CD8-positive, alpha-beta T cell (primary cell): ENCODE measurements at regions of chr18 and their contacts with region 1.

Region 1: DNA sequence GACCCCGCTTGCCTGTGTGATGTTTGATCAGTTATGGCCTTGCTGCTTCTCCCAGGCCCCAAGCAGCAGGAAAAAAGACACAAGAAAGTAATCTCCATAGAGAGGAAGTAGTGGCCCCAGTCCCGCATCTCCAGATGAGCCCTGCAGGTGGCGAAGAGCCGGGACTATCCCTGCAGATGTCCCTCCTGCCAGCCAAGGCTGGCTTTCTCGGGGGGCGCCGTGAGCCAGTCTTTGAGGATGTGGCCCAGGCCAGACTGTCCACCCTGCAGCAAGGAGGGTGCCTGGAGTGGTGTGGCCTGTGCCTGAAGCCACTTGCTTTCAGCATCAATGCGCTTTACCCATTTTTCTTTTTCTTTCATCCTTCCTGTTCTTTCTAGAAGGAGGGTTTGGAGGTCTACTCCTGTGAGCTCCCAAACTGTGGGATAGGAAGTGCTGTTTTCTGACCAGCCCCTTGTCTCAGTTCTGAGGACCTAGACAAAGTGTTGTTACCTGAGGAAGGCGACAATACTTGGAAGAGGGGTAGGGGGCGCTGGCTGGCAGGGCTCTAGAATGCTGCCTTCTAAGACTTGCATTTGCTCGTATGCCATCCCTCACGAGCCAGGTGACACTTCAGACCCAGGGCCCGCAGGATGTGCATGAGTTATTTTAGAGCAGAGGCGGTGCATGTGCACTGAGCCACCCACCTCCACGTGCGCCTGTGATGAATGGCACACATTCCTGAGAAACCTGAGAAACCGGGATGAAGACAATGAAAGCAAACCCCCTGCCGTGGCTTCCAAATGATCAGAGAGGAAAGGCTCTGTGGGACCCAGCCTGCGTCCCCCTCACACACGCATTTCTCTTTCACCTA is 255.8 kb downstream of the FBXO15 start:
- DNase-seq: no peak
- ATAC-seq: no peak
- H3K4me3 ChIP-seq: no peak overlapping the region
- H3K4me3 Mint-ChIP-seq: no peak overlapping the region
- H3K27ac ChIP-seq: no peak overlapping the region
- H3K27ac Mint-ChIP-seq: no peak overlapping the region
- H3K4me1 ChIP-seq: no peaks in the 10 kb centered on the region
- H3K4me1 Mint-ChIP-seq: no peaks in the 10 kb centered on the region
- H3K27me3 ChIP-seq: no peaks in the 10 kb centered on the region
- H3K27me3 Mint-ChIP-seq: peaks cover 4% of the 10 kb centered on the region
- CTCF ChIP-seq: no peak

Region 2: GRCh38 chr18:72316497-72316896 is 1575.3 kb before region 1 on chr18:
- CTCF ChIA-PET with region 1: no interaction called
- POLR2A ChIA-PET with region 1: no interaction called
- intact Hi-C with region 1: no loop called
- DNase-seq: no peak
- ATAC-seq: no peak
- H3K4me3 ChIP-seq: no peak overlapping the region
- H3K4me3 Mint-ChIP-seq: no peak overlapping the region
- H3K27ac ChIP-seq: no peak overlapping the region
- H3K27ac Mint-ChIP-seq: no peak overlapping the region
- H3K4me1 ChIP-seq: no peaks in the 10 kb centered on the region
- H3K4me1 Mint-ChIP-seq: no peaks in the 10 kb centered on the region
- H3K27me3 ChIP-seq: no peaks in the 10 kb centered on the region
- H3K27me3 Mint-ChIP-seq: no peaks in the 10 kb centered on the region
- CTCF ChIP-seq: no peak

Region 3: DNA sequence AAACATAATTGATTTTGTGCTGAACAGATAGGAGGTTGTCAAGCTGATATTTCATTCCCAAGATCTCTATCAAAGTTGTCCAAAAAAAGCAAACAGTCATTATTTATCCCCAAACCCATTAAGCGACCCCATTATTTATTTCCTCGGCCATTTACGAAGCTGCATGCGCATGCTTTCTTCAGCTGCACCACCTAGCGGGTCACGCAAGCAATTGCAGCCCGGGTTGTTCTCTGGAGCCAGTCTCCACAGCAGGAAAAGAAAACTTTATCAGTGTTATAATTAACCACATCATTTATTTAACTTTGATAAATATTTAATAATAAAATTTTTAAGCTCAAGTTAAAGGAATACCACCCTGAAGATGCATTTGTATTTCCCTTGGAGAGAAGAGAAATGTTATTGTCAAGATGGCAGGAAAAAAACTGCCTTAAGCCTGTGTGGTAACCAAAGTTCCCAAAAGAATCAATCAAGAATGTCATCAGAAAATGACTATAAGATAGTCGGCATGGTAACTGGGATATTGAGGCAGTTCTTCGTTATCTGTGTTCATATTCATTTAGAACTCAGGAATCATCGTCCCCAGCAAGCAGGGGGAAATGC is 48.9 kb before region 1 on chr18:
- CTCF ChIA-PET with region 1: no interaction called
- POLR2A ChIA-PET with region 1: no interaction called
- intact Hi-C with region 1: loop called in 1 of 2 experiments (anchors 1 kb)
- DNase-seq: peak in 7 of 9 experiments; percentile 7 to 56 (median 30)
- ATAC-seq: peak; percentile 49
- H3K4me3 ChIP-seq: no peak overlapping the region
- H3K4me3 Mint-ChIP-seq: peak overlapping the region; percentile 78
- H3K27ac ChIP-seq: no peak overlapping the region
- H3K27ac Mint-ChIP-seq: no peak overlapping the region
- H3K4me1 ChIP-seq: no peaks in the 10 kb centered on the region
- H3K4me1 Mint-ChIP-seq: peaks cover 7% of the 10 kb centered on the region
- H3K27me3 ChIP-seq: no peaks in the 10 kb centered on the region
- H3K27me3 Mint-ChIP-seq: peaks cover 2% of the 10 kb centered on the region
- CTCF ChIP-seq: peak; percentile 94